B cell (primary cell): ENCODE measurements at regions of chr9 and their contacts with region 1.

Region 1: GRCh38 chr9:136849038-136849959 is at the start of gene PHPT1:
- DNase-seq: peak; percentile 99
- ATAC-seq: peak; percentile 94
- H3K4me3 ChIP-seq: peak within 1 kb of the TSS; percentile 53 to 87 (median 82)
- H3K4me3 Mint-ChIP-seq: peak within 1 kb of the TSS; percentile 96
- H3K27ac ChIP-seq: peak within 1 kb of the TSS in 1 of 2 donors; percentile 55
- H3K27ac Mint-ChIP-seq: peak within 1 kb of the TSS; percentile 94
- H3K4me1 ChIP-seq: peaks cover 33 to 38% of the 10 kb centered on the region in 2 donors
- H3K4me1 Mint-ChIP-seq: peaks cover 20% of the 10 kb centered on the region
- H3K27me3 ChIP-seq: peaks cover 0 to 28% (median 9%) of the 10 kb centered on the region in 4 experiments
- H3K27me3 Mint-ChIP-seq: peaks cover 7% of the 10 kb centered on the region
- CTCF ChIP-seq: no peak
- total RNA-seq, gene PHPT1: 33.1 and 36.5 TPM in 2 replicates

Region 2: GRCh38 chr9:136644598-136645351 is 204.5 kb before region 1 on chr9:
- CTCF ChIA-PET with region 1: no interaction called
- POLR2A ChIA-PET with region 1: no interaction called
- intact Hi-C with region 1: no loop called
- DNase-seq: peak; percentile 84
- ATAC-seq: peak; percentile 96
- H3K4me3 ChIP-seq: peak overlapping the region in 4 of 5 experiments; percentile 21 to 47 (median 29)
- H3K4me3 Mint-ChIP-seq: peak overlapping the region; percentile 16
- H3K27ac ChIP-seq: peak overlapping the region in 1 of 2 donors; percentile 18
- H3K27ac Mint-ChIP-seq: no peak overlapping the region
- H3K4me1 ChIP-seq: peaks cover 36% of the 10 kb centered on the region in 2 donors
- H3K4me1 Mint-ChIP-seq: peaks cover 22% of the 10 kb centered on the region
- H3K27me3 ChIP-seq: peaks cover 0 to 43% (median 21%) of the 10 kb centered on the region in 4 experiments
- H3K27me3 Mint-ChIP-seq: peaks cover 13% of the 10 kb centered on the region
- CTCF ChIP-seq: peak; percentile 94

Region 3: DNA sequence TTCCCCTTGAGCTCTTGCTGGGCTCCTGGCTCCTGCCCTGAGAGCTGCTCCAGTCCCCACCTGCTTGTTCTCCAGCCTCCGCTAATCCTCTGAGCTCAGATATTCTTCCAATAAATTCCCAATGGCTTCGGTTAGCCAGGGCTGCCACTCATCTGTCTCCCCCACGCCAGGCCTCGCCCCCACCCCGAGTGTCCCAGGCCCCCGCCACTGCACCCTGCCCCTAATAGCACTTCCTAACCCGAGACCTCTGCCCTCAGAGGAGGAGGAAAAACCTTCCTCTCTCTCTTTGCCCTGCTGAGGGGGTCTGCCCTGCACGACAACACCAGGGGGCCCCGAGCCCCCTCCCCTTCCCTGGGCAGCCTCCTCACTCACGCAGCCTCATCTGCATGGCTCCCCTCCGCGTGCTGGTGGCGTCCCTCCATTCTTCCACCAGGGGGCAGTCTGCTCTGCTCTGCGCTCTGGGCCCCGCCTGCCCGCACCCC is 79.5 kb before region 1 on chr9:
- CTCF ChIA-PET with region 1: no interaction called
- POLR2A ChIA-PET with region 1: interaction called, 10 read pairs
- intact Hi-C with region 1: no loop called
- DNase-seq: peak; percentile 67
- ATAC-seq: no peak
- H3K4me3 ChIP-seq: no peak overlapping the region
- H3K4me3 Mint-ChIP-seq: peak overlapping the region; percentile 37
- H3K27ac ChIP-seq: no peak overlapping the region
- H3K27ac Mint-ChIP-seq: peak overlapping the region; percentile 46
- H3K4me1 ChIP-seq: peaks cover 23 to 45% of the 10 kb centered on the region in 2 donors
- H3K4me1 Mint-ChIP-seq: peaks cover 37% of the 10 kb centered on the region
- H3K27me3 ChIP-seq: peaks cover 0 to 8% (median 0%) of the 10 kb centered on the region in 4 experiments
- H3K27me3 Mint-ChIP-seq: peaks cover 6% of the 10 kb centered on the region
- CTCF ChIP-seq: peak; percentile 33

Region 4: DNA sequence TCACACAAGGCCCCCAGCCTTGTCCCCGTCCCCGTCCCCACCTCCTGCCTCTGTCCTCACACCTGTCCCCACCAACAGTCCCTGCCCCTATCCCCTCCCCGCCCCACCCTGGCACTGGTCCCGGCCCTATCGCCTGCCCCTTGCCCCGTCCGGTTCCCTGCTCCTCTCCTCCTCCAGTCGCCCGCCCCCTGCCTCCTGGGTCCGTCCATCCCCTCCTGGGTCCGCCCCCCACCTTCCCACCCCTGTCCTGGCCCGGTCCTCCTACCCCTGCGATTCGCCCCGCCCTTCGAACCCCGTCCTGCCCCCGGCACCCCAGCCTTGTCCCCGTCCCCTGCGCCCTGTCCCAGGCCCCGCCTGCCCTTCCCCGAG is 16.4 kb after region 1 on chr9:
- CTCF ChIA-PET with region 1: interaction called, 3 read pairs
- POLR2A ChIA-PET with region 1: interaction called, 8 read pairs
- intact Hi-C with region 1: loop called (anchors 1 kb)
- DNase-seq: no peak
- ATAC-seq: no peak
- H3K4me3 ChIP-seq: peak overlapping the region in 4 of 5 experiments; percentile 62 to 85 (median 74)
- H3K4me3 Mint-ChIP-seq: peak overlapping the region; percentile 90
- H3K27ac ChIP-seq: peak overlapping the region; percentile 48 to 92
- H3K27ac Mint-ChIP-seq: peak overlapping the region; percentile 61
- H3K4me1 ChIP-seq: peaks cover 8 to 19% of the 10 kb centered on the region in 2 donors
- H3K4me1 Mint-ChIP-seq: peaks cover 19% of the 10 kb centered on the region
- H3K27me3 ChIP-seq: no peaks in the 10 kb centered on the region
- H3K27me3 Mint-ChIP-seq: no peaks in the 10 kb centered on the region
- CTCF ChIP-seq: no peak

Region 5: GRCh38 chr9:136902259-136902821 is 53.0 kb after region 1 on chr9:
- CTCF ChIA-PET with region 1: no interaction called
- POLR2A ChIA-PET with region 1: no interaction called
- intact Hi-C with region 1: loop called (anchors 5 kb)
- DNase-seq: peak; percentile 85
- ATAC-seq: peak; percentile 83
- H3K4me3 ChIP-seq: peak overlapping the region in 3 of 5 experiments; percentile 23 to 47 (median 32)
- H3K4me3 Mint-ChIP-seq: peak overlapping the region; percentile 83
- H3K27ac ChIP-seq: peak overlapping the region; percentile 90 to 96
- H3K27ac Mint-ChIP-seq: peak overlapping the region; percentile 96
- H3K4me1 ChIP-seq: peaks cover 24 to 41% of the 10 kb centered on the region in 2 donors
- H3K4me1 Mint-ChIP-seq: peaks cover 47% of the 10 kb centered on the region
- H3K27me3 ChIP-seq: no peaks in the 10 kb centered on the region
- H3K27me3 Mint-ChIP-seq: no peaks in the 10 kb centered on the region
- CTCF ChIP-seq: no peak

Region 6: DNA sequence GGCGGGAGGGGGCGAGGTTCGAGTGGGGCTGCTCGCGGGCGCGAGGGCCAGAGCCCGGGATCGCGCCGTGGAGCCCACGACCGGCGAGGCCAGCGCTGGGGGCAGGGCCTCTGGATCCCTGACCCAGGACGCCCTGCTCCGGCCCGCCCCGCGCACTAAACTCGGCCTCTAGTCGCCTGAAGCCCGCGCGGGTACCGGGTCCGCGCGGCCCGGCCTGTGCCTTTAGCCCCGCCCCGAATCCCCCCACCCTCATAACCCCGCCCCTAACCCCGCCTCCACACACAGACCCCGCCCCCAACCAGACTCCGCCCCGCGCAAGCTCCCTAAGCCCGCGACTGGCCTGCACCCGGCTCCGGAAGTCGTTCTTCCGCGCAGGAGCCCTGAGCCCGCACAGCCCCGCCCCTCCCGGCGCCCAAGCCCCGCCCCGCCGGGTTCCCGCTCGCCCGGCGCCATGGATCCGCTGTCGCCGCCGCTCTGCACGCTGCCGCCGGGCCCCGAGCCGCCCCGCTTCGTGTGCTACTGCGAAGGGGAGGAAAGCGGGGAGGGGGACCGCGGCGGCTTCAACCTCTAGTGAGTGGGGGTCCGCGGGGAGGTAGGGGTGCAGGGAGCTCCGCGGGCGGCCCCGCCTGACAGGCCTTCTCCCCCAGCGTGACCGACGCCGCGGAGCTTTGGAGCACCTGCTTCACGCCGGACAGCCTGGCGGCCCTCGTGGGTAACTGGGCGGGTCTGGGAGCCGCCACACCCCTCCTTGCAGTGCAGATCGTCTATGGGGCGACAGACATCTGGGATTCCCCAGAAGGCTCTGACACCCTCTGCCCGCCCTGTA is 142.9 kb after region 1 on chr9 and contains the start of gene PAXX:
- CTCF ChIA-PET with region 1: no interaction called
- POLR2A ChIA-PET with region 1: no interaction called
- intact Hi-C with region 1: loop called (anchors 1 kb)
- DNase-seq: peak; percentile 92
- ATAC-seq: peak; percentile 91
- H3K4me3 ChIP-seq: peak within 1 kb of the TSS; percentile 32 to 71 (median 66)
- H3K4me3 Mint-ChIP-seq: peak within 1 kb of the TSS; percentile 91
- H3K27ac ChIP-seq: peak within 1 kb of the TSS; percentile 76 to 97
- H3K27ac Mint-ChIP-seq: peak within 1 kb of the TSS; percentile 91
- H3K4me1 ChIP-seq: peaks cover 27 to 38% of the 10 kb centered on the region in 2 donors
- H3K4me1 Mint-ChIP-seq: peaks cover 26% of the 10 kb centered on the region
- H3K27me3 ChIP-seq: peaks cover 0 to 3% (median 0%) of the 10 kb centered on the region in 4 experiments
- H3K27me3 Mint-ChIP-seq: peaks cover 6% of the 10 kb centered on the region
- CTCF ChIP-seq: no peak
- total RNA-seq, gene PAXX: 73.0 and 74.8 TPM in 2 replicates